ENCODE measurements at regions of chr5 and their contacts with region 1.

Region 1: GRCh38 chr5:131589510-131590348 is 45.3 kb downstream of the RAPGEF6 start:
- DNase-seq: no peak
- ATAC-seq: peak; percentile 57
- H3K4me3 Mint-ChIP-seq: no peak overlapping the region
- H3K27ac Mint-ChIP-seq: no peak overlapping the region
- H3K4me1 Mint-ChIP-seq: peaks cover 25% of the 10 kb centered on the region
- H3K27me3 Mint-ChIP-seq: no peaks in the 10 kb centered on the region
- CTCF ChIP-seq: peak; percentile 48

Region 2: DNA sequence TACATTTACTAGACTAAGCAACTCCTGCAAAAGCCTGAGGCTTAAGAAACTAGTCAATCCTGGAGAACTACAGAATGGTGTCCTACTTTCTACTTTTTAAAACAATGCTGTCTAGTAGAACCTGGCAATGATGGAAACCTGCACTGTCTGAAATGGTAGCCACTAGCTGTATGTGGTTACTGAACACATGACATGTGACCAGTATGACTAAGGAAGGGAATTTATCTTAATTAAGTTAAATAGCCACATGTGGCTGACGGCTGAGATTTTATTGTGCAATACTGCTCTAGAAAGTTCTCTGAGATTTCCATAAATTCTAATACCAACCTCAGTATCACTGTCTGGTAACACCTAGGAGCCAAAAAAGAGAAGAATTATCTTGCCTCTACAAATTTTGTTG is 90.2 kb after region 1 on chr5:
- CTCF ChIA-PET with region 1: interaction called, 6 read pairs
- POLR2A ChIA-PET with region 1: no interaction called
- intact Hi-C with region 1: loop called (anchors 5 kb)
- DNase-seq: no peak
- ATAC-seq: no peak
- H3K4me3 Mint-ChIP-seq: no peak overlapping the region
- H3K27ac Mint-ChIP-seq: no peak overlapping the region
- H3K4me1 Mint-ChIP-seq: peaks cover 22% of the 10 kb centered on the region
- H3K27me3 Mint-ChIP-seq: no peaks in the 10 kb centered on the region
- CTCF ChIP-seq: no peak